Heart right ventricle (tissue), 16 donors: ENCODE measurements at regions of chr4 and their contacts with region 1.

Region 1: DNA sequence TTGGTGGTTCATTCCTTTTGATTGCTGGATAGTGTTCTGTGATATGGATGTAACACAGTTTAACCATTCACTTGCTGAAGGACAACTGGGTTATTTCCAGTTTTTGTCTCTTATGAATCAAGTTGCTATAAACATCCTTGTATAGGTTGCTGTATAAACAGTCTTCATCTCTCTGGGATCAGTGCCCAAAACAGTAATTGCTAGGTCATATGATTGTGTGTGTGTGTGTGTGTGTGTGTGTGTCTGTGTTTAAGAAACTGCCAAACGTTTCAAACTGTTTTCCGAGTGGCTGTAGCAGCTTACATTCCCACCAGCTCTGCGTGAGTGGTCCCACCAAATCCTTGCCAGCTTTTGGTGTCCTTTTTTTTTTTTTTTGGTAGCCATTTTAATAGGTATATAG is 60.4 kb downstream of the F11 start:
- DNase-seq: no peak
- ATAC-seq: no peak
- H3K4me3 ChIP-seq: no peak overlapping the region
- H3K27ac ChIP-seq: no peak overlapping the region
- H3K4me1 ChIP-seq: no peaks in the 10 kb centered on the region
- H3K27me3 ChIP-seq: peaks cover 0 to 15% (median 0%) of the 10 kb centered on the region in 7 donors
- CTCF ChIP-seq: no peak

Region 2: DNA sequence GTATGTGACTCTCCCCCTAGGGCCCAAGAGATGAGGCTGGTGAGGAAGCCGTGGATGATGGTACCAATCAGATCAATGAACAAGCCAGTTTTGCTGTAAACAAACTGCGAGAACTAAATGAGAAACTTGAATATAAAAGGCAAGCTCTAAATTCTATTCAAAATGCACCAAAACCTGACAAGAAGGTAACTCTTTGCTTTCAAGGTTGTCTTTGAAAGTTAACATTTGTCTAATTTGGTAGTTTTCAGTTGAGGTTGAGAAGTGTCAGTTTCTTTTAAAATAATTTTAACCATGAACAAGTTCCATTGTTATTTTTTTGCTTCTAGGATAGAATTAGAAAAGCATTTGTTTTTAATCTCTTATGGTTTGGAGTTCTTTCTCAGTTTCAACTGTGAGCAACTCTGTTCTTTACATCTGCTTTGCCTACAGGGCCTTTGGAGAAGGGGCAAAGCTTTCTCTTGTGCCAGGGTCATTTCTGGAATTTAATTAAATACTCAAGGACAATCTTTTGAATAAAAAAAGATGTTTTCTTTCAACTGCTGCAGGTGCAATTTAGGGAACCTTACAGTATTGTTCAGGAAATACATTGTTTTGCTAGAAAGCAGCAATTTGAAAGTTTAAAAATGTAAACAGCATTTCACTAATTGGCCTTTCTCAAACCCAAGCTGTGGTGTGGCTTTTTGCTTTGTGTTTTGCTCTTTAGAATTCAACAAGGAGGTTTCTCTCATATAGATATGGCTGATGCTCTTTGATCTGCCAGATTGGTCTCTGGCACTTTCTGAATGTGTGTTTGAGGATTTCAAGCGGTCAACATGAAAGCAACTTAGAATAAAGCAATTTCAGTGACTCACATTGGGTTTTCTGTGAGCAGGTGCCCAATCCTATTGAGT is 993.6 kb before region 1 on chr4:
- intact Hi-C with region 1: no loop called
- DNase-seq: no peak
- ATAC-seq: no peak
- H3K4me3 ChIP-seq: no peak overlapping the region
- H3K27ac ChIP-seq: no peak overlapping the region
- H3K4me1 ChIP-seq: no peaks in the 10 kb centered on the region
- H3K27me3 ChIP-seq: no peaks in the 10 kb centered on the region
- CTCF ChIP-seq: no peak

Region 3: DNA sequence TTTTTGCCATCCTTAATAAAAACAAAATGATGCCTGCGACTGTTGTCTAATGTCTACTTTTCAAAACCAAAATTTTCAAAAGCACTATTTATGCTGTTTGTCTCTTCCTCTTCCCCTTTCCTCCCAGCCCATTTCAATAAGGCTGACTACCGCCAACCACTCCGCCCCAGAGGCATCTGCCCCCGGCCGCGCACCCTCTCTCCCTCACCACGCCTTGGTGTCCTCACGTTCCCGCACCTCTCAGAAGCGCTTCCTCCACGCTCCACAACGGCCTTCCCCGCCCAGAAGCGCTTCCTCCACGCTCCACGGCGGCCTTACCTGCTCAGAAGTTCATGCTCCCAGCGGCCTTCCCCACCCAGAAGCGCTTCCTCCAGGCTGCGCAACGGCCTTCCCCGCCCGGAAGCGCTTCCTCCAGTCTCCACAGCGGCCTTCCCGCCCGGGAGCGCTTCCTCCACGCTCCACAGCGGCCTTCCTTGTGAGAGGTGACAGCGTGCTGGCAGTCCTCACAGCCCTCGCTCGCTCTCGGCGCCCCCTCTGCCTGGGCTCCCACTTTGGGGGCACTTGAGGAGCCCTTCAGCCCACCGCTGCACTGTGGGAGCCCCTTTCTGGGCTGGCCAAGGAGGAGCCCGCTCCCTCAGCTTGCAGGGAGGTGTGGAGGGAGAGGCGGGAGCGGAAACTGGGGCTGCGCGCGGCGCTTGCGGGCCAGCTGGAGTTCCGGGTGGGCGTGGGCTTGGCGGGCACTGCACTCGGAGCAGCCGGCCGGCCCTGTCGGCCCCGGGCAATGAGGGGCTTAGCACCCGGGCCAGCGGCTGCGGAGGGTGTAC is 1178.8 kb after region 1 on chr4:
- intact Hi-C with region 1: loop called in 1 of 10 experiments (anchors 10 kb)
- DNase-seq: no peak
- ATAC-seq: no peak
- H3K4me3 ChIP-seq: peak overlapping the region in 1 of 10 donors; percentile 10
- H3K27ac ChIP-seq: no peak overlapping the region
- H3K4me1 ChIP-seq: no peaks in the 10 kb centered on the region
- H3K27me3 ChIP-seq: peaks cover 0 to 4% (median 0%) of the 10 kb centered on the region in 7 donors
- CTCF ChIP-seq: no peak